ENCODE measurements at regions of chr12 and their contacts with region 1.

Region 1: GRCh38 chr12:6723607-6724396 is at the start of gene COPS7A:
- DNase-seq: peak; percentile 98 to 100 (median 99)
- H3K4me3 ChIP-seq: peak within 1 kb of the TSS; percentile 61 to 94 (median 82)
- H3K27ac ChIP-seq: peak within 1 kb of the TSS; percentile 53 to 97 (median 87)
- H3K27me3 ChIP-seq: no peaks in the 10 kb centered on the region
- CTCF ChIP-seq: peak in 40 of 56 donors; percentile 4 to 63 (median 28)
- total RNA-seq, gene COPS7A: 52.6 to 143 (median 103) TPM

Region 2: DNA sequence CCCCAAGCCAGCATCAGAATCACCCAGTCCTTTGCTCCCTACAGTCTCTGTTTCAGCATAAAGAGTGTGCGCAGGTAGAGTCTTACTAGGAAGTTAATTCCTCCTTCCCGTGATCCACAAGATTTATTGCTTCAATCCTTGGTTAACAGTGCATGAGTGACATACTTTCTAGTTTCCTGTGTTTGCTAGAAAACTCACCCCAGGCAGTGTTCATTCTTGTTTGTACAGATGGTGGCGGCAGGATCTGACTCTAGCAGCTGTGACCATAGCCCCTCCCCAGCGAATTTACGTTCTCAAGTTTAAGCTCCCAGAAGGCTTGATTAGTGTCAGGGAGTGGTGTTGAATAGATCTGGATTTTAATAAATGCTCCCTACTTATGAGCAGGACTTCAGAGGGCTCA is 702.9 kb before region 1 on chr12:
- intact Hi-C with region 1: no loop called
- DNase-seq: no peak
- H3K4me3 ChIP-seq: no peak overlapping the region
- H3K27ac ChIP-seq: no peak overlapping the region
- H3K27me3 ChIP-seq: no peaks in the 10 kb centered on the region
- CTCF ChIP-seq: no peak

Region 3: GRCh38 chr12:6662906-6663742 is 60.7 kb before region 1 on chr12 and contains the start of gene ING4:
- intact Hi-C with region 1: loop called (anchors 1 to 2 kb)
- DNase-seq: peak; percentile 96 to 100 (median 99)
- H3K4me3 ChIP-seq: peak within 1 kb of the TSS; percentile 58 to 95 (median 80)
- H3K27ac ChIP-seq: peak within 1 kb of the TSS in 58 of 59 donors; percentile 25 to 96 (median 82)
- H3K27me3 ChIP-seq: no peaks in the 10 kb centered on the region
- CTCF ChIP-seq: peak in 18 of 56 donors; percentile 3 to 51 (median 14)
- total RNA-seq, gene ING4: 45.0 to 72.1 (median 59.4) TPM

Measured in dorsolateral prefrontal cortex (tissue), 120 donors.